Heart left ventricle (tissue), 16 donors: ENCODE measurements at regions of chr11 and their contacts with region 1.

Region 1: DNA sequence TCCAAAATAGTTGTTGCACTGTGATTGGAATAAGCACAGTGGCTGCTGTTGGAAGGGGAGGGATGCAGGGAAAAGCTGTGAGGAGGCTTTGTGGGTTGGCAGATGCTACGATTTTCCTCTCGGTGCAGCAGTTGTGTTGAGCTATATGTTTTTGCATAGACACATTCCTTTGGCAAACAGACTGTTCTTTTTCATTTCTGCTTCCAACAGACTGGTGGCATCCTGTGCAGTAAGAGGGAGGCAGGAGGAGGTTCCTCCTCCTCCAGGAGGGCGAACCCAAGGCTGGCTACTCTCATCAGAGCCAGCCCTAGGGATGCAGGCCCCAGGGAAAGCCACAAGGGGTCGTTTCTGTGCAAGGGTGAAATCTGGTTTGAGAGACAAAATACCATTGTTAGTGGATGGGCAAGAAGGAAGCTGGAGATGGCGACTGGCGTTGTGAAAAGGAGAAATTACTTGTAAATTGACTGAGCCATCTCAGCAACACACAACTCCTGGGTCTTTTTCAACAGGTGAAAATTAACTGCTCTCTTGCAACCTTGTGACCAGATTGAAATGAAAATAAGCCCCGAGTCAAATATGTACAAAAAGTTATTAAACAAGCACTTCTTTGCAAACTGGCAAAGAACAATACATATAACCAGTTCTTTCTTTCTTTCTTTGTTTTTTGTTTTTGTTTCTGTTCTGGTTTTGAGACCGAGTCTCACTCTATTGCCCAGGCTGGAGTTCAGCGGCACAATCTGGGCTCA is 26.5 kb upstream of the UBASH3B start:
- DNase-seq: peak; percentile 42 to 71 (median 54)
- ATAC-seq: peak in 3 of 4 donors; percentile 69 to 75 (median 74)
- H3K4me3 ChIP-seq: no peak overlapping the region
- H3K27ac ChIP-seq: no peak overlapping the region
- H3K4me1 ChIP-seq: peaks cover 0 to 7% (median 0%) of the 10 kb centered on the region in 12 donors
- H3K27me3 ChIP-seq: peaks cover 0 to 24% (median 3%) of the 10 kb centered on the region in 9 donors
- CTCF ChIP-seq: peak; percentile 61 to 79 (median 70)
- POLR2A ChIP-seq: no peak

Region 2: DNA sequence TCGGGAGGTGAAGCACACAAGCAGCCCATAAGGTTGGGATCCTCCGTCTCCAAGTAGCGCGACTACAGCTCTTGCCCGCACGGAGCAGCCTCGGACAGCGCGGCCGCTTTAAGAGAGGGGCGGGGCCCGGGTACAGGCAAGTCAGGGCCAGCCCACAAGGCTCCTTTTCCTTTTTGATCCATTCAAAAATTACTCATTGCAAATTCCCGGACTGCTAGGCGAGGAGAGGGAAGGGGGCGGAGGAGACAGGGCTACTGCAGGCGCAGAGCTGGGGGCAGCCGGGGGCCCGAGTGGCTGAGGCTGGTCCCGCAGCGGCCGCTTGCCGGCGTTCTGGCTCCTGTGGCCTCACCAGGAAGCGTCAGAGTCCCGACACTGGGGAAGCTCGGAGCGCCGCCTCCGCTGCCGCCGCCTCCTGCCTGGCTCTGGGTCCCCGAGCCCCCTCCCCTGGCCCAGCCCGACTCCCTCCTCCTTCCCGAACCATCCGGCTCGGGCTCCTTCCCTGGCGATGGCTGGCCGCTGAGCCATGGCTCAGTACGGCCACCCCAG is 26.6 kb after region 1 on chr11 and contains the start of gene UBASH3B:
- intact Hi-C with region 1: loop called in 1 of 10 experiments (anchors 1 kb)
- DNase-seq: peak; percentile 75 to 87 (median 84)
- ATAC-seq: peak; percentile 77 to 92 (median 90)
- H3K4me3 ChIP-seq: peak within 1 kb of the TSS; percentile 59 to 93 (median 80)
- H3K27ac ChIP-seq: peak within 1 kb of the TSS; percentile 48 to 92 (median 84)
- H3K4me1 ChIP-seq: peaks cover 0 to 54% (median 11%) of the 10 kb centered on the region in 12 donors
- H3K27me3 ChIP-seq: peaks cover 0 to 8% (median 0%) of the 10 kb centered on the region in 9 donors
- CTCF ChIP-seq: peak in 2 of 12 donors; percentile 7 to 31
- POLR2A ChIP-seq: peak in 1 of 2 donors; percentile 45
- total RNA-seq, gene UBASH3B: 1.3 to 19.0 (median 1.7) TPM

Region 3: GRCh38 chr11:122668562-122669090 is 39.6 kb after region 1 on chr11:
- intact Hi-C with region 1: no loop called
- DNase-seq: no peak
- ATAC-seq: peak in 1 of 4 donors; percentile 43
- H3K4me3 ChIP-seq: no peak overlapping the region
- H3K27ac ChIP-seq: no peak overlapping the region
- H3K4me1 ChIP-seq: peaks cover 0 to 69% (median 0%) of the 10 kb centered on the region in 12 donors
- H3K27me3 ChIP-seq: no peaks in the 10 kb centered on the region
- CTCF ChIP-seq: no peak
- POLR2A ChIP-seq: no peak

Region 4: DNA sequence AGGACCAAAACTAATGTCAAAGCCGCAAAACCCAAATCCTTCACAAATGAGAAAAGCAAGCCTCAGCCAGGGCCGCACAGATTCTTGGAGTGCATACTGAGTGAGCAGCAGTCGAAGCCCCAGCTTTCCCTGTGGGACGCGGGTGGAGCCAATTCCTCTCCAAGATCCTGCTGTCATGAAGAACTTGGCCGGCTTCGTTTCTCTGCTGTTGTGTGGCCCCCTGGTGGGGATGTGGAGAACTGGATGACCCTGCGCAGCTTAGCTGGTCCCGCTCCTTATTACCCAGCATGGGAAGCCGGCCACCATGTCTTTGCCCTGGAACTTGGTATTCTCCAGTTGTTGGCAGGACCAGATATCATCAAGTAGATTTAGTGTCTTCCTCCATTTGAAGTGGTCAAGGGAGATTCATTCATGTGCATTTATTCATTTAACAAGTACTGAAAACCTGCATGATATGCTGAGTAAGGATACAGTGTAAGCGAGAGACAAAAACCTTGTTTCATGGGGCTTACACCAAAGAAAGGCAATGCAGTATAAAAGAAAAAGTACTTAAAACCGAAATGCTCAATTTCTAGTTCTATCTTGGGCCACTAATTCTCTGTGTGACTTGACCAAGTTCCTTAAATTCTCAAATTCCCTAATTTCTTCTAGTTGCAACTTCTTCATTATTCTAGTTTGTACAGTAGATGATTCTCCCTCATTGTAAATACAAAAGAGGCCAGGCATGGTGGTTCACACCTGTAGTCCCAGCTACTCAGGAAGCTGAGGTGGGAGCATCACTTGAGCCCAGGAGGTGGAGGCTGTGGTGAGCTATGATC is 152.6 kb after region 1 on chr11:
- intact Hi-C with region 1: loop called (anchors 1 to 5 kb)
- DNase-seq: peak; percentile 89 to 92 (median 90)
- ATAC-seq: peak; percentile 89 to 98 (median 96)
- H3K4me3 ChIP-seq: no peak overlapping the region
- H3K27ac ChIP-seq: peak overlapping the region in 1 of 12 donors; percentile 28
- H3K4me1 ChIP-seq: peaks cover 0 to 46% (median 16%) of the 10 kb centered on the region in 12 donors
- H3K27me3 ChIP-seq: peaks cover 0 to 4% (median 0%) of the 10 kb centered on the region in 9 donors
- CTCF ChIP-seq: peak; percentile 83 to 97 (median 94)
- POLR2A ChIP-seq: no peak

Region 5: GRCh38 chr11:122843281-122844141 is 214.5 kb after region 1 on chr11:
- intact Hi-C with region 1: loop called in 1 of 10 experiments (anchors 10 kb)
- DNase-seq: no peak
- ATAC-seq: no peak
- H3K4me3 ChIP-seq: no peak overlapping the region
- H3K27ac ChIP-seq: peak overlapping the region in 1 of 12 donors; percentile 51
- H3K4me1 ChIP-seq: no peaks in the 10 kb centered on the region
- H3K27me3 ChIP-seq: no peaks in the 10 kb centered on the region
- CTCF ChIP-seq: no peak
- POLR2A ChIP-seq: no peak

Region 6: DNA sequence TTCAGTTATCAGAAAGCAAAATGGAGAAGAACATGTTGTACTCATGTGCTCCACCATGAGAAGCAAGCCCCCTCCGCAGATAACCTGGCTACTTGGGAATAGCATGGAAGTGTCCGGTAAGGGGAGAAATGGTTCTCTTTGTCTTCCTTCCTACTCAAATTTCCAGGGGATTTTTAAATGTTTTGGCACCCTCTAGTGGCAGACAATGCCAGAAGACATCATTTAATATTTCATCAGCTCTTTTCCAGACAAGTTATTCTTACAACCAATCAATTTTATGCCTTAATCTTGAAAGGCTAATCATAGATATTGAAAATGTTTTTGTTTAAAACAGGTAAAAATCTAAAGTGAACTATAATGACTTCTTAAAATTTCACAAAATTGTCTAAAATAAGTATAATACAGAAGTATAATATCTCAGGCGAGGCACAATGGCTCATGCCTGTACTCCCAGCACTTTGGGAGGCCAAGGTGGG is 225.0 kb after region 1 on chr11:
- intact Hi-C with region 1: loop called (anchors 2 to 10 kb)
- DNase-seq: peak in 2 of 5 donors; percentile 45 to 51
- ATAC-seq: no peak
- H3K4me3 ChIP-seq: no peak overlapping the region
- H3K27ac ChIP-seq: no peak overlapping the region
- H3K4me1 ChIP-seq: peaks cover 0 to 18% (median 0%) of the 10 kb centered on the region in 12 donors
- H3K27me3 ChIP-seq: peaks cover 0 to 14% (median 0%) of the 10 kb centered on the region in 9 donors
- CTCF ChIP-seq: peak; percentile 65 to 84 (median 78)
- POLR2A ChIP-seq: no peak

Region 7: DNA sequence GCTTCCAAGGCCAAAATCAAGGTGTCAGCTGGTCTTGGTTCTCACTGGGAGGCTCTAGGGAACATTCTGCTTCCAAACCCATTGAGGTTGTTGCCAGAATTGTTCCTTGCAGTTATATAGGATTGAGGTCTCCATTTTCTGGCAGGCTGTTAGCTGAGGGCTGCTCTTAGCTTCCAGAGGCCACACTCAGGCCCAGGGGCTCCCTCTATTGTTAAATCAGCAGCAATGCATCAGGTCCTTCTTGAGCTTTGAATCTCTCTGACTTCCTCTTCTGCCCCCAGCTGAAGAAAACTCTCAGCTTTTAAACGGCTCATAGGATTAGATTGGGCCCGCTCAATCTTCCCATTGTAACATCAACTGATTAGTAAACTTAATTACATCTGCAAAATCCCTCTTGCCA is 392.0 kb after region 1 on chr11:
- intact Hi-C with region 1: loop called in 2 of 10 experiments (anchors 10 kb)
- DNase-seq: peak in 1 of 5 donors; percentile 11
- ATAC-seq: peak in 2 of 4 donors; percentile 41 to 44
- H3K4me3 ChIP-seq: no peak overlapping the region
- H3K27ac ChIP-seq: no peak overlapping the region
- H3K4me1 ChIP-seq: peaks cover 0 to 7% (median 0%) of the 10 kb centered on the region in 12 donors
- H3K27me3 ChIP-seq: peaks cover 0 to 13% (median 3%) of the 10 kb centered on the region in 9 donors
- CTCF ChIP-seq: peak; percentile 17 to 60 (median 46)
- POLR2A ChIP-seq: no peak

Region 8: GRCh38 chr11:123033895-123034294 is 404.9 kb after region 1 on chr11:
- intact Hi-C with region 1: loop called in 3 of 10 experiments (anchors 10 kb)
- DNase-seq: no peak
- ATAC-seq: peak in 1 of 4 donors; percentile 37
- H3K4me3 ChIP-seq: no peak overlapping the region
- H3K27ac ChIP-seq: no peak overlapping the region
- H3K4me1 ChIP-seq: peaks cover 0 to 3% (median 0%) of the 10 kb centered on the region in 12 donors
- H3K27me3 ChIP-seq: peaks cover 0 to 3% (median 0%) of the 10 kb centered on the region in 9 donors
- CTCF ChIP-seq: peak in 8 of 12 donors; percentile 12 to 34 (median 22)
- POLR2A ChIP-seq: no peak